Mammary epithelial cell (primary cell): ENCODE measurements at regions of chr1 and their contacts with region 1.

Region 1: GRCh38 chr1:51058858-51059257 is 43.2 kb upstream of the C1orf185 start:
- DNase-seq: peak; percentile 10
- H3K4me3 ChIP-seq: no peak overlapping the region
- H3K27ac ChIP-seq: no peak overlapping the region
- H3K4me1 ChIP-seq: peaks cover 30% of the 10 kb centered on the region
- H3K27me3 ChIP-seq: no peaks in the 10 kb centered on the region
- CTCF ChIP-seq: peak; percentile 50 to 61

Region 2: GRCh38 chr1:50750021-50750619 is 308.7 kb before region 1 on chr1:
- CTCF ChIA-PET with region 1: interaction called, 4 read pairs
- dilution Hi-C with region 1: no loop called
- in situ Hi-C with region 1: no loop called
- intact Hi-C with region 1: loop called (anchors 5 kb)
- DNase-seq: peak; percentile 24
- H3K4me3 ChIP-seq: no peak overlapping the region
- H3K27ac ChIP-seq: no peak overlapping the region
- H3K4me1 ChIP-seq: peaks cover 4% of the 10 kb centered on the region
- H3K27me3 ChIP-seq: no peaks in the 10 kb centered on the region
- CTCF ChIP-seq: peak; percentile 56 to 63

Region 3: GRCh38 chr1:50978144-50978851 is 80.6 kb before region 1 on chr1:
- CTCF ChIA-PET with region 1: no interaction called
- dilution Hi-C with region 1: no loop called
- in situ Hi-C with region 1: no loop called
- intact Hi-C with region 1: no loop called
- DNase-seq: peak; percentile 54
- H3K4me3 ChIP-seq: peak overlapping the region; percentile 64 to 95 (median 81)
- H3K27ac ChIP-seq: no peak overlapping the region
- H3K4me1 ChIP-seq: peaks cover 16% of the 10 kb centered on the region
- H3K27me3 ChIP-seq: no peaks in the 10 kb centered on the region
- CTCF ChIP-seq: no peak